ENCODE measurements at regions of chr1 and their contacts with region 1.

Region 1: GRCh38 chr1:21189906-21190500 is 13.3 kb upstream of the EIF4G3 start:
- DNase-seq: peak; percentile 42
- H3K4me3 ChIP-seq: no peak overlapping the region
- H3K27ac ChIP-seq: no peak overlapping the region
- H3K4me1 ChIP-seq: peaks cover 9% of the 10 kb centered on the region
- H3K27me3 ChIP-seq: no peaks in the 10 kb centered on the region
- CTCF ChIP-seq: no peak
- POLR2A ChIP-seq: no peak

Region 2: DNA sequence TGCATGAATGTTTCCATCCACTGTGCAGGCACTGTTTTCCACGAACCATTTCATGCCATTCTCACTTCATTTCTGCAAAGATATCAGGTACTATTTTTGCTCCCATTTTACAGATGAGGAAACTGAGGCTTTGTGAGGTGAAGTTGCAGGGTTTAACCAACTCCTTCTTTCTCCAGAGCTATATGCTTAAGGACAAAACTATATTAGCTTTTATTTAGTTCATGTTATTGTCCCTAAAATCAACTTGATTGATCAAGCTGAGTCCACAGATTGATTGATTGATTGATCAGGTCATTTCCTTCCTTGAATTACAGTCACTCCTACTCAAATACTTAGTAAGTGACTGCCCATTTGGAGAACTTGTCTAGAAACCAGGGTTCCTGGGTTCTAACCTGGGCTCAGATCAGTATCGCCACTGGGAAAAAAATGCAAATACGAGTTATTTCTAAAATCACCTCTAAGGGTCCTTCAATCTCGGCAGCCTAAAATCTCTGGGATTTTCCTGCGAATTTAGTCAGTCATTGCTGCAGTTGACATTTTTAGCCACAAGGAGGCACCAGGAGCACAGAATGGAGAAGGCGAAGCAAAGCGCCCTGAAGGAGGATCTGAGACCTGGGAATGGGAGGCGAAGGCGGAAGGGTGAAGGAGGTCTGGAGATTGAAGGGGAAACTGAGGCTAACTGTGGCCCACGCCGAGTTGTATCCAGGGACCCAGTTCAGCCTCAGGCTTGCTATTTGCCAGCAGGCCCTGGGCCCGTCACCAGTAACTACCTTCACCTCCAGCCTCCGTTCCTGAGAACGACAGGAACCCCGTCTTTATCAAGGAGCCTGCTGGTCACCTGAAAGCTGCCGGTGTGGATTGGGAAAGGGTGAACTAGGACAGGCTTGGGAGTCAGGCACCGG is 667.8 kb before region 1 on chr1:
- CTCF ChIA-PET with region 1: interaction called, 3 read pairs
- POLR2A ChIA-PET with region 1: no interaction called
- dilution Hi-C with region 1: no loop called
- intact Hi-C with region 1: loop called (anchors 10 kb)
- DNase-seq: peak; percentile 83
- H3K4me3 ChIP-seq: no peak overlapping the region
- H3K27ac ChIP-seq: no peak overlapping the region
- H3K4me1 ChIP-seq: no peaks in the 10 kb centered on the region
- H3K27me3 ChIP-seq: peaks cover 3 to 6% of the 10 kb centered on the region in 2 experiments
- CTCF ChIP-seq: peak; percentile 76 to 88
- POLR2A ChIP-seq: no peak

Region 3: GRCh38 chr1:20732588-20733360 is 457.2 kb before region 1 on chr1 and contains the start of gene SH2D5:
- CTCF ChIA-PET with region 1: interaction called, 11 read pairs
- POLR2A ChIA-PET with region 1: no interaction called
- dilution Hi-C with region 1: no loop called
- intact Hi-C with region 1: no loop called
- DNase-seq: peak; percentile 87
- H3K4me3 ChIP-seq: peak within 1 kb of the TSS; percentile 27 to 57 (median 42)
- H3K27ac ChIP-seq: peak within 1 kb of the TSS; percentile 56
- H3K4me1 ChIP-seq: peaks cover 14% of the 10 kb centered on the region
- H3K27me3 ChIP-seq: peaks cover 7 to 16% of the 10 kb centered on the region in 2 experiments
- CTCF ChIP-seq: peak; percentile 20 to 33
- POLR2A ChIP-seq: no peak
- total RNA-seq, gene SH2D5: 1.0 and 2.4 TPM in 2 replicates

Region 4: GRCh38 chr1:20786253-20787028 is 403.6 kb before region 1 on chr1:
- CTCF ChIA-PET with region 1: interaction called, 49 read pairs
- POLR2A ChIA-PET with region 1: interaction called, 15 read pairs
- dilution Hi-C with region 1: no loop called
- intact Hi-C with region 1: loop called (anchors 1 kb)
- DNase-seq: peak; percentile 96
- H3K4me3 ChIP-seq: peak overlapping the region; percentile 32 to 90 (median 83)
- H3K27ac ChIP-seq: peak overlapping the region; percentile 89
- H3K4me1 ChIP-seq: peaks cover 13% of the 10 kb centered on the region
- H3K27me3 ChIP-seq: no peaks in the 10 kb centered on the region
- CTCF ChIP-seq: no peak
- POLR2A ChIP-seq: peak; percentile 69

Region 5: DNA sequence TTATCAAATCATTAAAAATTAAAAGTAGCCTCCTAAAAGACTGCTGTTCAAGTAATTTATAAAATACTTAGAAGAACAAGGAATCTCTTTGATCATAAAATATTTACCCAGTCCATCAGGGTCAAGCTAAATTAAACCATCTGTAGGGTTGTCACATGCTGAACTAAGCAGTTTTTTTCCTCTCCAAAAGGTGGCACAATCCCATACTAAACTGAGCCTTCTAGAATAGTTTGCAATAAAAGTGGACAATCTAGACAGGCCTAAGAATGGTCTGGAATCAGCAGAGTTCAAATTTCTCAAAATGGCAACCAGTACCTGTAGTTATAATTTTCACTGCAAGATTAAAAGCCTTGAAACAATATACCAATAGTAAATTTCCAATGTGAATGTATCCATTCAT is 208.1 kb before region 1 on chr1:
- CTCF ChIA-PET with region 1: interaction called, 66 read pairs
- POLR2A ChIA-PET with region 1: no interaction called
- dilution Hi-C with region 1: no loop called
- intact Hi-C with region 1: loop called (anchors 1 kb)
- DNase-seq: peak; percentile 48
- H3K4me3 ChIP-seq: no peak overlapping the region
- H3K27ac ChIP-seq: no peak overlapping the region
- H3K4me1 ChIP-seq: peaks cover 9% of the 10 kb centered on the region
- H3K27me3 ChIP-seq: no peaks in the 10 kb centered on the region
- CTCF ChIP-seq: peak in 1 of 2 donors; percentile 11
- POLR2A ChIP-seq: no peak

Region 6: DNA sequence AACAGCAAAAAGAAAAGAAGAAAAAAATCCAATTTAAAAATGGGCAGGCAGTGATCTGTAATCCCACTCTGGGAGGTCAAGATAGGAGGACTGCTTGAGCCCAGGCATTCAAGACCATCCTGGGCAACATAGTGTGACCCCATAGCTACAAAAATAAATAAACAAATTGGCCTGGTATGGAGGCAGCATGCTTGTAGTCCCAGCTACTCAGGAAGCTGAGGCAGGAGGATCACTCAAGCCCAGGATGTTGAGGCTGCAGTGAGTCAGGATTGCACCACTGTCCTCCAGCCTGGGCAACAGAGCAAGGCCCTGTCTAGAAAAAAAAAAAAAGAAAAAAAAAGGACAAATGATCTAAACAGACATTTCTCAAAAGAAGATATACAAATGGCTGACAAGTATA is 112.9 kb before region 1 on chr1:
- CTCF ChIA-PET with region 1: interaction called, 33 read pairs
- POLR2A ChIA-PET with region 1: no interaction called
- dilution Hi-C with region 1: no loop called
- intact Hi-C with region 1: loop called (anchors 5 kb)
- DNase-seq: peak; percentile 77
- H3K4me3 ChIP-seq: no peak overlapping the region
- H3K27ac ChIP-seq: peak overlapping the region; percentile 8
- H3K4me1 ChIP-seq: peaks cover 16% of the 10 kb centered on the region
- H3K27me3 ChIP-seq: no peaks in the 10 kb centered on the region
- CTCF ChIP-seq: no peak
- POLR2A ChIP-seq: no peak

Region 7: GRCh38 chr1:21129407-21129806 is 60.6 kb before region 1 on chr1:
- CTCF ChIA-PET with region 1: no interaction called
- POLR2A ChIA-PET with region 1: no interaction called
- dilution Hi-C with region 1: no loop called
- intact Hi-C with region 1: no loop called
- DNase-seq: no peak
- H3K4me3 ChIP-seq: no peak overlapping the region
- H3K27ac ChIP-seq: no peak overlapping the region
- H3K4me1 ChIP-seq: no peaks in the 10 kb centered on the region
- H3K27me3 ChIP-seq: no peaks in the 10 kb centered on the region
- CTCF ChIP-seq: no peak
- POLR2A ChIP-seq: no peak

Region 8: GRCh38 chr1:21594935-21595897 is 405.2 kb after region 1 on chr1:
- CTCF ChIA-PET with region 1: no interaction called
- POLR2A ChIA-PET with region 1: no interaction called
- dilution Hi-C with region 1: no loop called
- intact Hi-C with region 1: no loop called
- DNase-seq: peak; percentile 49
- H3K4me3 ChIP-seq: no peak overlapping the region
- H3K27ac ChIP-seq: no peak overlapping the region
- H3K4me1 ChIP-seq: no peaks in the 10 kb centered on the region
- H3K27me3 ChIP-seq: peaks cover 0 to 5% of the 10 kb centered on the region in 2 experiments
- CTCF ChIP-seq: peak; percentile 67 to 82
- POLR2A ChIP-seq: no peak

Measured in endothelial cell of umbilical vein (primary cell).